ENCODE measurements at regions of chr20 and their contacts with region 1.

Region 1: GRCh38 chr20:49278036-49278817 is at the start of gene ZNFX1:
- DNase-seq: peak; percentile 98
- H3K4me3 Mint-ChIP-seq: peak within 1 kb of the TSS; percentile 99
- H3K27ac Mint-ChIP-seq: peak within 1 kb of the TSS; percentile 99
- H3K4me1 Mint-ChIP-seq: peaks cover 50% of the 10 kb centered on the region
- H3K27me3 Mint-ChIP-seq: no peaks in the 10 kb centered on the region
- total RNA-seq, gene ZNFX1: 49.3 and 51.0 TPM in 2 replicates

Region 2: DNA sequence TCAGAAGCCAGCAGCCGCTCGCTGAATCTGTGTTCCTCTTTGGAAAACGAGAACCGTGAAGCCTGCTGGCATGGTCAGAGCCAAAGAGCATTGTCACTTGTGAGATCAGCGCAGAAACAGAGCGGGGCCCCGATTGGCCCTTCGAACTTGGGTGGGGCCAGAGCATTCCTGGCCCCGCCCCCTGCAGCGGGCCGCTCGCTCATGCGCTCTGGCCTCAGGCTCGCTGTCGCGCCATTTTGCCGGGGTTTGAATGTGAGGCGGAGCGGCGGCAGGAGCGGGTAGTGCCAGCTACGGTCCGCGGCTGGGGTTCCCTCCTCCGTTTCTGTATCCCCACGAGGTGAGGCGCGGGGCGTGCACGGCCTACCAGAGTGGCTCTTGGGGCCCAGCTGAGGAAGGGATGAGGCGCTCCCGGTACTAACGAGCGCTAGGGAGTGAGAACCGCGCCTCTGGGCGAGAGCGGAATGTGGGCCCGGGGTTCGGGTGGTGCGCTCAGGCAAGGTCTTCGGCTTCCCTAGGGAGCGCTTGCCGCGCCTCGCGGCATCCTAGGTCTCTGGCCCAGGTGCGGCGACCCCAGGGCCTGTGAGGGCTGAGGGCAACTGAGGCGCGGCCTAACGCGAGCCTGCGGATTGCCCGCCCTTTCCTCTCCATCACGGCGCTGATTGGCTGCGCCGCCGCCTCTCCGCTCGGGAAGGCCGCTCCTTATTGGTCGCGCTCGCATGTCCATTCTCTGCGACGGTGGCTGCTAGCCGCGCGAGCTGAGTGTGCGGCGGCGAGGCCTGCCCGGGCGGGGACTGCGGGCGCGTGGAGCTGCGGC is 231.9 kb before region 1 on chr20 and contains the start of gene CSE1L:
- intact Hi-C with region 1: loop called (anchors 2 kb)
- DNase-seq: peak; percentile 94
- H3K4me3 Mint-ChIP-seq: peak within 1 kb of the TSS; percentile 98
- H3K27ac Mint-ChIP-seq: peak within 1 kb of the TSS; percentile 100
- H3K4me1 Mint-ChIP-seq: peaks cover 27% of the 10 kb centered on the region
- H3K27me3 Mint-ChIP-seq: no peaks in the 10 kb centered on the region
- total RNA-seq, gene CSE1L: 114 TPM in 2 replicates

Region 3: GRCh38 chr20:49186535-49187329 is 91.5 kb before region 1 on chr20:
- intact Hi-C with region 1: loop called (anchors 2 kb)
- DNase-seq: peak; percentile 61
- H3K4me3 Mint-ChIP-seq: peak overlapping the region; percentile 87
- H3K27ac Mint-ChIP-seq: peak overlapping the region; percentile 62
- H3K4me1 Mint-ChIP-seq: peaks cover 42% of the 10 kb centered on the region
- H3K27me3 Mint-ChIP-seq: peaks cover 2% of the 10 kb centered on the region

Region 4: DNA sequence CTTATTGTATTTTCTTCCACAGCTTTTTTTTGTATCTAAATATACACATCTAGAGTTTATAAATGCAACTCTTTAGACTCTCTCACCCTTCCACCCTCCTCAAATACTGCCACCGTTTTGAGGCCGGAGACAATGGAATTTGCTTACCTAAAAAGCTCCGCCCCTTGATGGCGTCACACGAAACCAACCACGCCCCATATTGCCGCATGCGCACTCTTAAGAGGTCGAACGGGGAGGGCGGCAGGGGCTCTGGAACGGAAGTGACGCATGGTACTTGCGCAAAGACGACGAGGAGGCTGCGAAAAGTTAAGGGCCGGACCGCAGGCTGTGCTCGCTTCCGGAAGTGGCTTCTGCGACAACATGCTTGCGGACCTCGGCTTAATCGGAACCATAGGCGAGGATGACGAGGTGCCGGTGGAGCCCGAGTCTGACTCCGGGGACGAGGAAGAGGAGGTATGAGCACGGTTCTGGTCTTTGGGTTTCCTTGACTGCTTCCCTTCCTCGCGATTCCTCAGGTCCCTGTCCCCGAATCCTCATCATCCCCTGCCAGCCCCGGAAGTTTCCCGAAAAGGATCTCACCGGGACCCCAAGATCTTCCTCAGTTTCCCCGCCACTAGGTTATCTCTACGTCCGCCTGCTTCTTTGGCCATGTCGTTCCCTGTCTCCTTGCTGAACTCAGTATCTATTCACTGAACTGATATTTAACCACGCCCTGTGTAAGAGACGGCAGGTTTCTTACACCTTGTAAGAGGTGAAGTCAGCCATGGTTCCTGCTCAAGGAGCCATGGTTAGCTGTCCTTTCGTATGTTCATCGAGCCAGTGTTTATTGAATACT is 58.9 kb before region 1 on chr20 and contains the start of gene DDX27:
- intact Hi-C with region 1: loop called (anchors 1 kb)
- DNase-seq: peak; percentile 96
- H3K4me3 Mint-ChIP-seq: peak within 1 kb of the TSS; percentile 99
- H3K27ac Mint-ChIP-seq: peak within 1 kb of the TSS; percentile 98
- H3K4me1 Mint-ChIP-seq: peaks cover 17% of the 10 kb centered on the region
- H3K27me3 Mint-ChIP-seq: no peaks in the 10 kb centered on the region
- total RNA-seq, gene DDX27: 51.4 and 54.0 TPM in 2 replicates

Region 5: DNA sequence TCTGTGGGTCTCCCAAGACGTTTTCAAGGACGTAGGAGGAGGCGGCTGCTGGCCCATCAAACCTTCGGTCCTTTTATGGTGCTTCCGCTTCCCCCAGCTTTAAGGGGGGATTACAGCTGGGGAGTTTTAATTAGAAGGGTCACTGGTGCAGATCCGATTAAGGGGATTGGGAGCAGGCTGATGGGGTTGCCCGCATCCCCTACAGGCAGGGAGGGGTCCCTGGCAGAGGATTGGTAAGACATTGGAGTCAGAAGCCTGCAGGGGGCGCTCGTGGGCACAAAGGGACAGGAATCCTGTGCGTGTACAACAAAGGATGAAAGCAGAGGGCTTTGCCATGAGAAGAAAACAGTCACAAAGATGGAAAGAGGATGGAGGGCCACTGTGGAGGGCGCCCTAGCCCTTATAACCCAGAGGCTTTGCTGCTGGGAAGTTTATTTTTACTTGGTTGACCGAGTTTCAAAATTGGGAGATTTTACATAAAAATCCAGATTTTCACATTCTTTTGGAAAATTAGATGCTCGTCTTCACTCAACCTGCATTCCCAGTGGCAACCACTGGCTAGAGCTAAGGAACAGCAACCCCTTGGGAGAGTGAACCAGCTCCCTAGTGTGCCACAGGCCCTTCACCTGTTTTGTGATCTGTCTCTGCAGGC is 106.3 kb after region 1 on chr20:
- intact Hi-C with region 1: no loop called
- DNase-seq: peak; percentile 55
- H3K4me3 Mint-ChIP-seq: no peak overlapping the region
- H3K27ac Mint-ChIP-seq: no peak overlapping the region
- H3K4me1 Mint-ChIP-seq: no peaks in the 10 kb centered on the region
- H3K27me3 Mint-ChIP-seq: peaks cover 23% of the 10 kb centered on the region

Region 6: GRCh38 chr20:49812463-49813304 is 534.5 kb after region 1 on chr20 and contains the start of gene SLC9A8:
- intact Hi-C with region 1: loop called (anchors 5 kb)
- DNase-seq: peak; percentile 75
- H3K4me3 Mint-ChIP-seq: peak within 1 kb of the TSS; percentile 92
- H3K27ac Mint-ChIP-seq: peak within 1 kb of the TSS; percentile 94
- H3K4me1 Mint-ChIP-seq: peaks cover 43% of the 10 kb centered on the region
- H3K27me3 Mint-ChIP-seq: no peaks in the 10 kb centered on the region
- total RNA-seq, gene SLC9A8: 16.4 and 18.7 TPM in 2 replicates

Region 7: DNA sequence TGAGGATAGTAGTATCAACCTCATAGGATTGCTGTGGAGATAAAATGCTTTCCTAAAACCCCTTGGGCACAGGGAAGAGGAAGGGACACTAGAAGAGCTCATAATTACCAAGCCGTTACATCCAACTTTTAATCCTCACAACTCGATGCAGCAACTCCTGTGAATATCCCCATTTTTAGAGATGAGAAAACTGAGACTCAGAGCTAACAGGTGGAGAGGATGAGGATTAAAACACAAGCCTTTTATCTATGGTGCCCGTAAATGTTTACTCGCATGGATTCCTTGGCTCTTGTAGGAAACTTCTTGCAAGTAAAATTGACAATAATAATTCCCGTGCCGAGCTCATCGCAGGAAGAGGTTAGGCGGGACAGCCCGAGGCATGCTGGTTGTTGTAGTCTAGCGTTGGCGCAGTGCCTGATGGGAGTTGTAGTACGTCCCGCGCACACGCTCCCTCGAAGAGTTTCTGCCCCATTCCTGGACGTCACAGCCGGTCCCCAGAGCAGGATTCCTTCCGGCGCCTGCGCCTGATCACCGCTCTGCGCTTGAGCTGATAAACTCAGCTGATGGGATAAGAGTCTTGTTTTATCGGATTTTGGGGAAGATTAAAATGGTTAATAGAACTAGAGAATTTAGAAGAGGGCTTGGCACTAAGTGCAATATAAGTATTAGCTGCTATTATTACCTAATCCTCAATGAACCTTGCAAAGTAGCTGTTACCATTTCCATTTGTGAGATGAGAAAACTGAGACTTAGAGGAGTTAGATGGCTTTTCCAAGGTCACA is 837.6 kb after region 1 on chr20:
- intact Hi-C with region 1: loop called (anchors 5 kb)
- DNase-seq: peak; percentile 86
- H3K4me3 Mint-ChIP-seq: peak overlapping the region; percentile 85
- H3K27ac Mint-ChIP-seq: peak overlapping the region; percentile 95
- H3K4me1 Mint-ChIP-seq: peaks cover 43% of the 10 kb centered on the region
- H3K27me3 Mint-ChIP-seq: no peaks in the 10 kb centered on the region